Right ventricle myocardium inferior (tissue), 1 donor: ENCODE measurements at regions of chr14 and their contacts with region 1.

Region 1: DNA sequence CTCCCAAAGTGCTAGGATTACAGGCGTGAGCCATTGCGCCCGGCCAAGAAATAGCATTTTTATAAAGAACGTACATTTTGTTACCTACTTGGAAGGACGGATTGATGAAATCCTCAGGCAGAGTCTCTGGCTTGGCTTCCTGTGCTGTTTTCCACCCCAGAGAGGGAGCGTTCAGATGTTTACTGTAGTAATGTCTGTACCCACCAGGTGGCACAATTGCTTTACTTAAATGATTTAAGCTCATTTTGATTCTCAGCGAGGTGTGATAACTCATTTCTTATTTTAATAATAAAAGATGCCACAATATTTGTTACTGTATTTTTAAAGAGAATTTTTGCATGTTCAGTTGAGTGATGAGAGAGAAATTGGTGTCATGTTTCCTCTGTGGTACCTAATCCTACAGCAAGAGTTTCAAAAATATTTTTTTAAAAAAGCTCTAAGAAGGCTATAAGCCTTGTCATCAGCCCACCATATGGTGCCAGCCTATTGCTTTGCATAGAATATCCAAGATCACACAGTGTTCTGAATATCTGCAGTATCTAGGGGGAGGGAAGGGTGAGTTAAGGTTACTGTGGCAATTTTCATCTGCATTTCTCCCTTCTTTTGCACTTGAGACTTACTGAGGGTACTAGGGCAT is 82.6 kb upstream of the TRAF3 start:
- DNase-seq: no peak
- ATAC-seq: peak; percentile 58

Region 2: GRCh38 chr14:102524466-102525218 is 170.0 kb before region 1 on chr14:
- intact Hi-C with region 1: loop called (anchors 5 kb)
- DNase-seq: peak; percentile 99
- ATAC-seq: peak; percentile 98

Region 3: DNA sequence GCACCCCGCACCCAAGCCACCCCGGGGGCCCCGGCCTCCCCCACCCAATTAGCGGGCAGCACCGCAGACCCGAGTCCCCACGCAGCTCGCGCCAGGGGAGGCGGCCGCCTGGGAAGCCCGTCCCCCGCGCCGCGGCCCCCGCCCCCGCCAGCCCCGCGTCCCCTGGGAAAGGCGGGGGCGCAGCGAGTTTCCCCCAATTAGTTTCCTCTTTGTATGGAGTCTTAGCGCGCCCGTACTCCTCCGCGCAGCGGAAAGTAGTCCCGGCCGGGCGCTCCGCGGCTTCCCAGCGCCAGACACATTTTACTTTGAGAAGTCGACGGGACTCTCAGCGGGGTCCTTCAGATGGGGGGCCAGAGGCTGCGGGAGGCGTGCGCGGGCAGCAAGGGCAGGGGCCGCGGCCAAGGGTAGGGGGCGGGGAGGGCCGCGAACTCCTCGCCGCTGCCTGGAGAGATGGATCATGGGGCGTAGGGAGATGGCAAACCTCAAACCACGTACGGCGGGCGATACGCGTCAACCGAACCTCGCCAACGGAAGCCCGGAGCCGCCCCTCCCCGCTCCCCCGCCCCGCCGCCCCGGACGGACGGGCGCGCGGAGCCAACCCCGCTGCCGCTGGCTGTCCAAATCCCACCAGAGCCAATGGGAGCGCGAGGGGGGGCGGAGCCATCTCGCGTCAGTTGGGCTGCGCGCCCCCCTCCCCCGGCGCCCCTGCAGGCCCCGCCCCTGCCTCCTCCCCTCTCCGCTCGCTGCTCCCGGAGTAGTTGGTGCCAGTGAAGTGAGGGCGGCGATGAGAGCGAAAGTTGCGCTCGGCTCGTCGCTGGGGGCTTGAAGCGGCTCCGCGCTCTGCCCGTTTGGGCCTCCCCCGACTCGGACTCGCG is 102.5 kb before region 1 on chr14 and contains the start of gene RCOR1:
- intact Hi-C with region 1: loop called (anchors 10 kb)
- DNase-seq: peak; percentile 98
- ATAC-seq: peak; percentile 96
- total RNA-seq, gene RCOR1: 11.9 TPM

Region 4: DNA sequence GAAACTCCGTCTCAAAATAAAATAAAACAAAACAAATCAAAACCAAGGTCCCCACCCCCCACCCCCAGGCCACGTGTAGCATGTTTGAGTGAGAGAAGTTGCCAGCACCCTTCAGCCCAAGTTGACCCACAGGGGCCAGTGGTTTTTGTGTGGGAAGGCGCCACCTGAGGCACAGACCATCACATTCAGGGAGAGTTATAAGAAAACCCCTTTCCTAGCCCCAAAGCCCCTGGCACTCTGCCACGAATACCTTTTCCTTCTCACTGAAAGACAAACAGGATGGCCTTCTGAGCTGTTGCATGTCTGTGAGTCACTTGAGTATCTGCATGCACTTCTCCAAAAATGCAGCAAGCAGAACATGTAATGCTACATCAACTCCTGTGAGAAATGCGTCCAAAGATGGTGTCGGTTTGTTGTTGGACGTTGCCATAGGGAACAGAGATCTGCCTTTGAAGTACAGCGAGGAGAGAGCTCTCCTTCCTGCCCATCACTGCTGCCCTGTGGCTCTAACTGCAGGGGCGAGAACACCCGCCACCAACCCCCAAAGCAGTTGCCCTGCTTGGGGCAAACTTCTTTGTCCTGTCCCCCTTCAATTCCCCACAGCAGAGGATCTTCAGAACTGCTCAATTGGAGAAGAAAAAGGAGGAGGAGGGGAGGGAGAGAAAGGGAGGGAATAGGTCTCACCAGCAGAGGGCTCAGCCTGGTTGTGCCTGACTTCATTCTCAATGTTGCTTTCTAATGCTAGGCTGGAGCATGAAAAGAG is 79.9 kb after region 1 on chr14:
- intact Hi-C with region 1: loop called (anchors 5 kb)
- DNase-seq: no peak
- ATAC-seq: peak; percentile 60

Region 5: DNA sequence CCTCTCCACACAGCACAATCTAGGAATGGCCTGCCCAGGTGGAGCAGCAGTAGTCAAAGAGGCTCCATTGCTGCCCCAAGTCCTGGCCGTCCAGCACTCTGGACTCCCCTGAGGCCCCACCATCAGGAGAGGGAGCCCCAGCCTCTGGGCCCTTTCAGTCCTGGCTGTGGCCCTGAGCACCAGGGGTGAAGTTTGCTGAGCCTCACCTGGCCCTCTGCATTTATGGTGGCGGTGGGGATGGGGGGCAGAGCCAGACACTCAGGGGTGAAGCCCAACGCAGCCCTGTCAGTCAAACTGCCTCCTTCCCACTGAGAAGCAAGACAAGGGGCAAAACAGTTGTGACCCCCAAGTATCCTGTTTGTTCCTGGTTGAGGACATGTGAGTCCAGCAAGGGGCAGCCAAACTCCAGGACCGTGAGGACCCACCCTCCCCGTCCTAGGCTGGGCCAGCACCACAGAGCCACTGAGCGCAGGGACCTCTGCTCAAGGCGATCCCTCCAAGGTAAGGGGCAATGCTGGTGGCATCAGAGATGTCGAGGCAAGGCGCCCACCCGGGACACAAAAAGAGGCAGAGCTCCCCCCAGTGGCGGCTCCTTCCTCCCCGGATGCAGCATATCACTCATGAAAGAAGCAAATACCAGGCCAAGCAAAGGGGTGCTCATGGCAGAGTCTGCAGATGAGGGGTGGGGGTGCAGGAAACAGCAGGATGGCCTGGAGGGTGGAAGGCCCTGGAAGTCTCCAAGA is 223.0 kb after region 1 on chr14:
- intact Hi-C with region 1: loop called (anchors 2 kb)
- DNase-seq: no peak
- ATAC-seq: peak; percentile 51

Region 6: GRCh38 chr14:103078093-103078749 is 383.6 kb after region 1 on chr14:
- intact Hi-C with region 1: loop called (anchors 10 kb)
- DNase-seq: peak; percentile 91
- ATAC-seq: no peak